ENCODE measurements at regions of chr2 and their contacts with region 1.

Region 1: DNA sequence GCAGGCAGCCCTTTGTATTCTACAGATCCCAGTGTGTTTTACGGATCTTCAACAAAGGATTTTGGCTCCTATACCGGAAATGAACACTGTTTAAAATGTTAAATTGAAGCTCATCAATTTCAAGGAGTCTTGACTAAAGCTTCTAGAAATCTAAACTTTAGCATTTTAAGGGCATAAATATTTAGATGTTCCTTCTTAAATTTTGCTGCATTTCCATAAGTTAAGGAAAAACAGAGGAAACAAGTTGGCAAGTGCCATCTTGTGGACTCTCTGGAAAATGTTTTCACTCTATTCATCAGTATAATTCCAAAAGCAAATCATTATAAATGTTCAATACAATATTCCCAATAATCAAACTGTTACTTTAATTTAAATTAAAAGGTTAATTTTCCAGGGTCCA is 19.6 kb downstream of the CHN1 start:
- DNase-seq: peak; percentile 63
- H3K4me3 ChIP-seq: no peak overlapping the region
- CTCF ChIP-seq: peak; percentile 60

Region 2: GRCh38 chr2:174376967-174377366 is 608.7 kb before region 1 on chr2:
- in situ Hi-C with region 1: no loop called
- DNase-seq: no peak
- H3K4me3 ChIP-seq: no peak overlapping the region
- CTCF ChIP-seq: no peak

Region 3: DNA sequence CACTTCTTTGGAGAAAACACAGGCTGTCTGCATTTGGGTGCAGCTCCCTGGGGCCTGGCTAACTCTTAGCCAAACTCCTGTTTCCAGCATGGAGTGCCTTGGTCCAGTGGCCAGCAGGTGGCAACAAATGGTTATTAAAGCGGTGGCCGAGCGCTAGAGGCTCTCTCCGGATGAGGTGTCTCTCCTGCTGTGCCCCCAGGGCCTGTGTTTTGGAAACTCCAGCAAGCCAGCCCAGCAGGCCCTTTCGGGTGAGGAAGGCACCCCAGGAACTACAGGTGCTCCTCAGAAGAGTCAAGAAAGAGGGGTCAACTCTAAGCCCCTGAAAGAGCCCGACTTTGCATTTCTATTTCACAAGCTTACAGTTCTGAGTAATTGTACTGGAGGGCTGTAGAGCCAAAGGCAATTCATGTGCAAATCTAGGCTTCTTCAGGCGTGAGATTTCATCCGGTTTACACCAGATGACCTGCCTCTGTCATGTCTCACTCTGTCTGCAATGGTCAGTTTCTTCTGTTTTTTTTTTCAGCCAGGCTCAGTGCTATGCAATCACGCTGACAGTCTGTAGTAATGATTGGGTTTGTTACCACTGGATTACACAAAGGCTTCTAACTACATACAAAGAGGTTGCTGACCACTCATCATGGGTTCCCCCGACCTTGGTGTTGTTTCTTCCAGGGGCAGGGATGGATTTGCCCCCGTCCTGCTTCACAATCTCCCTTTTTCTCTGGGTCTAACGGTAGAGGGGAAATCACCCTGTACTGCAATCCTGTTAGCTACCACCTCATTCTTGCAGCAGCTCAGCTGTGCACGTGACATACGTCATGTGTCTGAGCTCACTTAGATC is 213.8 kb before region 1 on chr2:
- in situ Hi-C with region 1: loop called (anchors 10 kb)
- DNase-seq: peak; percentile 87
- H3K4me3 ChIP-seq: no peak overlapping the region
- CTCF ChIP-seq: peak; percentile 91